Dorsolateral prefrontal cortex (tissue), 120 donors: ENCODE measurements at regions of chr20 and their contacts with region 1.

Region 1: GRCh38 chr20:31723319-31724078 is 831 bp upstream of the BCL2L1 start:
- DNase-seq: peak; percentile 94 to 100 (median 98)
- H3K4me3 ChIP-seq: peak overlapping the region; percentile 64 to 100 (median 89)
- H3K27ac ChIP-seq: peak overlapping the region; percentile 93 to 100 (median 100)
- H3K27me3 ChIP-seq: no peaks in the 10 kb centered on the region
- CTCF ChIP-seq: peak; percentile 85 to 100 (median 97)

Region 2: DNA sequence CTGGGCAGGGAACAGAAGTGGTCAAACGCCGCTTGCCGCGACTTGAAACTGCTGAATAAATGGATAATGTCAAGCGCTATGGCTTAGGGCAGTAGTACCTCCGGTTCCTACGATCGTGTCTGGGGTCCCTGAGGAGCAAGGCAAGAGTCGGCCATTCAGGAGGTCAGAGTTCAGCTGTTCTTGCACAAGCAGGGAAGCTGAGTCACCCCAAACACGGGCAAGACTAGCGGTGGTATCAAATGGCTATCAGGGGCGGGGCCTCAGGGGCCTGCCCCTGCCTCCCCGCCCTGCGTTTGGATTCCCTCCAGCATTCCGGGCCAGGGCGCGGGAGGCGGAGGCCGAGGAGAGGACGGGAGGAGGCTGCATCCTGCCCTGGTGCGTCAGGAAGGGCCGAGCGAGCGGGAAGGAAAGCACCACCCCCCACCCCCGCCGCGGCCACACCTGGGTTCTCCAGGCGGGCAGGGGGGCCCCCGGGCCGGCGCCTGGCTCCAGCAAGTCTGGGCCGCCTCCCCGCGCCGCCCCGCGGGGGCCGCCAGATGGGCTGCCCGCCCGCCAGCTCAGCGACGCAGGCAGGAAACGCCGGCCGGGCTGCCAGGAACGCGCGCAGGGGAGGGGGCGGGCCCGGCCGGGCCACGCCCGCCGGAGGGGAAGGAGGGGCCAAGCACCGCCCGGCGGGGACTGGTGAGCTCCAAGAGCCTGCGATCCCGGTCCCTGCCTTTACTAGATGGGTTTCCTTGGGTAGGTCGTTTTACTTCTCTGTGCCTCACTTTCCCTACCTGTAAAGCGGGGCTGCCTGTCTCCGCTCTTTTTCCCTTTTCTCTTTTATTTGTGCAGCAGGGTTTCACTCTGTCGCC is 150.6 kb before region 1 on chr20:
- intact Hi-C with region 1: loop called (anchors 2 to 5 kb)
- DNase-seq: peak; percentile 67 to 91 (median 84)
- H3K4me3 ChIP-seq: peak overlapping the region; percentile 21 to 76 (median 63)
- H3K27ac ChIP-seq: peak overlapping the region; percentile 78 to 99 (median 94)
- H3K27me3 ChIP-seq: no peaks in the 10 kb centered on the region
- CTCF ChIP-seq: peak in 16 of 56 donors; percentile 0 to 55 (median 18)

Region 3: GRCh38 chr20:31661625-31662371 is 61.7 kb before region 1 on chr20:
- intact Hi-C with region 1: loop called (anchors 1 kb)
- DNase-seq: peak; percentile 77 to 86 (median 81)
- H3K4me3 ChIP-seq: peak overlapping the region; percentile 14 to 69 (median 56)
- H3K27ac ChIP-seq: peak overlapping the region; percentile 70 to 100 (median 92)
- H3K27me3 ChIP-seq: no peaks in the 10 kb centered on the region
- CTCF ChIP-seq: peak; percentile 72 to 96 (median 90)

Region 4: DNA sequence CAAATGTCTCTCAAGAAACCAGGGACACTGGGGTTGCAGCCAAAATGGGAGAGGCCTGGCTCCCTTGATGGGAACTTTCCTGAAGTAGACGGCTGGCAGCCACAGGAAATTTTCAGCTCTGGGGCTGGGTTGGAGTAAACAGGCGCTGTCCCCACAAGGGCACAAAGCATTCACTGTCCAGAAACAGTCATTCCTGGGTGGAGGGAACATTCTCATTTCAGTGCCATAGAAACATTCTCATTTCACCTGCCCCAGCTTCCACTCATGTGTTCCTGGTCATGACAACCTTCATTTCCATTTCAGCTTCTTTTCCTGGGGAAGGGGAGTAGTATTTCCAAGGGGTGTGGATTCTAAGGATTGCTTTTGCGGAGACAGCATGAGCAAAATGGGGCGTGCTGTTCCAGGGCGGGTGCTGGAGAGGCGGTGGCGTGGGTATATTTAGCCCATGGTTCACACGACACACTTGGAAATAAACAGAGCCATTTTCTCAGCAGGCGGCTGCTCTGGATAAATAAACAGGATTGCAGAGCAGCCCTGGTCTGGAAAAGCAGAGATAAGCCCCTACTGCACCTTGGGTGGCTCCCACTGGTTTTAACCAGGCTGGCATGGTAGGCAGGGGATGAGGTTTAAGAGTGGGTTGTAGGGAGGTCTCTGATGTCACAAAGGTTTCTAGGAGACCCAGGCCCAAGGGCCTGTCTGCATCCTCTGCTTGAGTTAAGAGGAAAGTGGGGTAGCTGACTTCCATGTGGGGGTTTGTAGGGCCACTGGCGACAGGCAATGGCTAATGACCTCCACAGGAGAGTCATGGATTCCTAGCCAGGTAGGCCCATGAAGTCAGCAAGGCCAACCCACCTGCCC is 52.9 kb before region 1 on chr20:
- intact Hi-C with region 1: loop called (anchors 2 kb)
- DNase-seq: peak; percentile 51 to 90 (median 86)
- H3K4me3 ChIP-seq: peak overlapping the region in 44 of 59 donors; percentile 1 to 48 (median 22)
- H3K27ac ChIP-seq: peak overlapping the region; percentile 95 to 100 (median 99)
- H3K27me3 ChIP-seq: no peaks in the 10 kb centered on the region
- CTCF ChIP-seq: peak in 13 of 56 donors; percentile 2 to 34 (median 16)

Region 5: GRCh38 chr20:31738729-31739561 is 15.4 kb after region 1 on chr20 and contains the start of gene TPX2:
- intact Hi-C with region 1: loop called in 1 of 2 experiments (anchors 2 kb)
- DNase-seq: peak; percentile 95 to 98 (median 97)
- H3K4me3 ChIP-seq: peak within 1 kb of the TSS; percentile 56 to 94 (median 81)
- H3K27ac ChIP-seq: peak within 1 kb of the TSS in 52 of 59 donors; percentile 11 to 87 (median 66)
- H3K27me3 ChIP-seq: no peaks in the 10 kb centered on the region
- CTCF ChIP-seq: peak in 33 of 56 donors; percentile 5 to 52 (median 27)
- total RNA-seq, gene TPX2: 1.1 to 4.1 (median 2.6) TPM